ENCODE measurements at regions of chr3 and their contacts with region 1.

Region 1: GRCh38 chr3:16534640-16535262 is 21.3 kb upstream of the RFTN1 start:
- DNase-seq: no peak
- ATAC-seq: no peak
- H3K4me3 ChIP-seq: no peak overlapping the region
- H3K27ac ChIP-seq: no peak overlapping the region
- H3K4me1 ChIP-seq: peaks cover 0 to 6% of the 10 kb centered on the region in 2 experiments; a peak in 3 of 5 replicates
- H3K27me3 ChIP-seq: peaks cover 20 to 31% of the 10 kb centered on the region in 2 experiments; a peak in 4 of 5 replicates
- CTCF ChIP-seq: no peak
- EP300 ChIP-seq: no peak
- POLR2A ChIP-seq: no peak
- RAD21 ChIP-seq: no peak

Region 2: GRCh38 chr3:16300881-16301359 is 233.8 kb before region 1 on chr3:
- CTCF ChIA-PET with region 1: no interaction called
- POLR2A ChIA-PET with region 1: no interaction called
- in situ Hi-C with region 1: no loop called
- intact Hi-C with region 1: no loop called
- DNase-seq: no peak
- ATAC-seq: no peak
- H3K4me3 ChIP-seq: no peak overlapping the region
- H3K27ac ChIP-seq: no peak overlapping the region; the same call in 2 of the 3 replicates
- H3K4me1 ChIP-seq: peaks cover 11 to 48% of the 10 kb centered on the region in 2 experiments
- H3K27me3 ChIP-seq: no peaks in the 10 kb centered on the region
- CTCF ChIP-seq: no peak
- EP300 ChIP-seq: no peak
- POLR2A ChIP-seq: no peak
- RAD21 ChIP-seq: no peak

Region 3: GRCh38 chr3:16523778-16524177 is 11.0 kb before region 1 on chr3:
- CTCF ChIA-PET with region 1: no interaction called
- POLR2A ChIA-PET with region 1: interaction called, 12 read pairs
- in situ Hi-C with region 1: no loop called
- intact Hi-C with region 1: no loop called
- DNase-seq: no peak
- ATAC-seq: no peak
- H3K4me3 ChIP-seq: no peak overlapping the region
- H3K27ac ChIP-seq: no peak overlapping the region
- H3K4me1 ChIP-seq: no peaks in the 10 kb centered on the region
- H3K27me3 ChIP-seq: peaks cover 7 to 30% of the 10 kb centered on the region in 2 experiments; a peak in 4 of 5 replicates
- CTCF ChIP-seq: no peak
- EP300 ChIP-seq: no peak
- POLR2A ChIP-seq: no peak
- RAD21 ChIP-seq: no peak